AG04450 (cell line): ENCODE measurements at regions of chr2 and their contacts with region 1.

Region 1: DNA sequence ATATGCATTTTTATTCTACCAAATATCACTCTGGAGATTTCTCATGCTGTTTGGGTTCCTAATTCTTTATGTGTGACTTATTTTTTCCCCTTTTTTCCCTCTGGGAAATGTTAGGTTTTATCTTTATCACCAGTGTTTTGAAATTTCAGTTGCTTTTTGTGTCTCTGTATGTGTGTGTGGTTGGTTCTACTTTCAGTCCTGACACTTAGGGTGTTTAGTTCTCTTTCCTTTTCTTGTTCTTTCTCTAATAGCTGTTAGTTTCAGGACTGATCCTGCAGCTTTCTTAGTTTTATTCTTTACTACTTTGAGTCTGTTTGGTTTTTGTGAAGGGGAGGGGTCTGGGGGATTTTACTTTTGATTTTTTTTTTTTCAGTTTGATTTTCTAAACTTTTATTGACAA is 23.1 kb downstream of the PPM1B start:
- DNase-seq: no peak
- H3K4me3 ChIP-seq: no peak overlapping the region
- H3K27ac ChIP-seq: no peak overlapping the region
- H3K27me3 ChIP-seq: no peaks in the 10 kb centered on the region
- CTCF ChIP-seq: no peak

Region 2: DNA sequence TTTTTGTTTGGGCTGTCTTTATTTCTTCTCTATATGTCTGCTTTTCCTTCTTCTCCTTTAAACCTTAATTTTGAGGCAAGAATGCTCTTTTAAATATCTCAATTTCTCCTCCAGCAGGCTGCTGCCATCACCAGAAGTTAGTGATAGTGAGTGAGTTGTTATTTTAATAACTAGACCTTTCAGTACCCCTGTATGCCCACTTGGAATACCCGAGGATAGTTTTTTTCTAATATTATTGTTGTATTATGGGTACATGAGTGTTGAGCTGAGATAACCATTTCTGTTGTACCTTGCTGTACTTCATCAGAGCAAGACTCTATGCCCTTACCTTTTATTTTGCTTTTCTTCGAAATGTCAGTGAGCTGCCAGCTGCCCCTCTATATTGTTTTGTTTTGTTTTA is 27.0 kb after region 1 on chr2:
- CTCF ChIA-PET with region 1: interaction called, 10 read pairs
- POLR2A ChIA-PET with region 1: no interaction called
- DNase-seq: no peak
- H3K4me3 ChIP-seq: no peak overlapping the region
- H3K27ac ChIP-seq: no peak overlapping the region
- H3K27me3 ChIP-seq: no peaks in the 10 kb centered on the region
- CTCF ChIP-seq: no peak